A549 (cell line): ENCODE measurements at regions of chr2 and their contacts with region 1.

Region 1: DNA sequence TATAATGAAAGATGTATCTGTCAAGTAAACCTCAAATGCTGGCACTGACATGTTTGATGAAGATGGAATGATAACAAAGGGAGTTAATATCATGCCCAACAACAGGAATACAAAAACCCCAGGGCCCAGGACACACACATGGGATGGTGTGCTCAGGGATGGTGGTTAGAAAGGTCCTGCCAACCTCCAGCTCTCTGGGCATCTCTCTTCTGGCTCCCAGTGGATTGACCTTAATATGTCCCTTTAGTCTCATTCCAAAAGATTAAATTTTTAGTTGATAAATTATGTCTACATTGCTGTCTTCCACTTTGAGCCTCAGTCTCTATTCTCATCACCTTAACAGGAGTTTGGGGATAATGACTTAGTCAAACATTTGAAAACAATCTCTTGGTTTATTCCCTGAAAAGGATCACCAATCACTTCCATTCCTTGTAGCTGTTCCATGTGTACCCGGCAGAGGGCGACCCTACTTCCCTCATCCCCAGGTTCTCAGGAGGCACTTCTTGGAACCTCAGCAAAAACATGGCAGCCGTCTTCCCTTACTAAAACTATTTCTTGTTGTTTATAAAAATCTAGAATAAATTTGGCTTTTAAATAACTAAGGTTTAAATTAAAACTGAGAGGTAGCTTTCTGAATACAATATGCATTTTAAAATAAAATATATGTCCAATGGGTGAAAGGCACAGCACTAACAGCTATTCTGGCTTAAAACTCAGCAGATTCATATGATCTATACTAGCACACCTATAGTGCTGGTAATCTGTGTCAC is 29.6 kb downstream of the MCEE start:
- DNase-seq: peak; percentile 74 to 83
- ATAC-seq: peak; percentile 92 to 97
- H3K4me3 ChIP-seq: no peak overlapping the region
- H3K27ac ChIP-seq: no peak overlapping the region
- H3K4me1 ChIP-seq: no peaks in the 10 kb centered on the region
- CTCF ChIP-seq: peak; percentile 78
- EP300 ChIP-seq: no peak
- POLR2A ChIP-seq: no peak
- RAD21 ChIP-seq: peak; percentile 56 to 71; a peak in 4 of 5 replicates

Region 2: GRCh38 chr2:70789304-70790135 is 310.9 kb before region 1 on chr2:
- CTCF ChIA-PET with region 1: no interaction called
- POLR2A ChIA-PET with region 1: no interaction called
- DNase-seq: peak; percentile 78 to 85
- ATAC-seq: peak; percentile 86 to 96
- H3K4me3 ChIP-seq: peak overlapping the region; percentile 45
- H3K27ac ChIP-seq: 0 out of 6 replicates have a peak overlapping the region, but pooled peaks of 1 of the 2 experiments have one; percentile 11
- H3K4me1 ChIP-seq: peaks cover 7% of the 10 kb centered on the region; the same call in 1 of the 3 replicates
- CTCF ChIP-seq: peak; percentile 98
- EP300 ChIP-seq: no peak
- POLR2A ChIP-seq: no peak
- RAD21 ChIP-seq: peak; percentile 90 to 94

Region 3: DNA sequence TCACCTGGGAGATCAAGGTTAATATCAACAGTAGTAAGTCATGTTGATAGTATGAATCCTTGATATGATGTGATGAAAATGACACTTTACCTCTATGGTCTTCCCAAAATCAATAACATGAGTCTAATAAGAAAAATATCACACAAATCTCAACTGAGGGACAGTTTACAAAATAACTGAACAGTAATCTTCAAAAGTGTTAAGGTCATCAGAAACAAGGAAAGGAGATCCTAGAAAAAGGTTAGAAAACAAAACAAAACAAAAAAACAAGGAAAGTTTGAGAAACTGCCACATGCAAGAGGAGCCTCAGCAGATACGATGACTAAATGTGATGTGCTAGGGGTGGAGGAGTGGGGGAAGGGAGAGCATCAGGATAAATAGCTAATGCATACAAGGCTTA is 13.5 kb after region 1 on chr2:
- CTCF ChIA-PET with region 1: interaction called, 19 read pairs
- POLR2A ChIA-PET with region 1: no interaction called
- DNase-seq: no peak
- ATAC-seq: no peak
- H3K4me3 ChIP-seq: no peak overlapping the region
- H3K27ac ChIP-seq: no peak overlapping the region
- H3K4me1 ChIP-seq: no peaks in the 10 kb centered on the region
- CTCF ChIP-seq: no peak
- EP300 ChIP-seq: no peak
- POLR2A ChIP-seq: no peak
- RAD21 ChIP-seq: no peak

Region 4: GRCh38 chr2:71120213-71120612 is 19.8 kb after region 1 on chr2:
- CTCF ChIA-PET with region 1: interaction called, 19 read pairs
- POLR2A ChIA-PET with region 1: no interaction called
- DNase-seq: no peak
- ATAC-seq: no peak
- H3K4me3 ChIP-seq: no peak overlapping the region
- H3K27ac ChIP-seq: no peak overlapping the region
- H3K4me1 ChIP-seq: no peaks in the 10 kb centered on the region
- CTCF ChIP-seq: no peak
- EP300 ChIP-seq: no peak
- POLR2A ChIP-seq: no peak
- RAD21 ChIP-seq: no peak

Region 5: GRCh38 chr2:71190656-71191569 is 90.5 kb after region 1 on chr2:
- CTCF ChIA-PET with region 1: interaction called, 11 read pairs
- POLR2A ChIA-PET with region 1: no interaction called
- DNase-seq: peak in 1 of 2 experiments; percentile 42
- ATAC-seq: peak; percentile 72 to 79
- H3K4me3 ChIP-seq: no peak overlapping the region
- H3K27ac ChIP-seq: no peak overlapping the region
- H3K4me1 ChIP-seq: no peaks in the 10 kb centered on the region
- CTCF ChIP-seq: peak; percentile 55
- EP300 ChIP-seq: no peak
- POLR2A ChIP-seq: no peak
- RAD21 ChIP-seq: peak; percentile 58 to 62; a peak in 4 of 5 replicates